ENCODE measurements at regions of chr1 and their contacts with region 1.

Region 1: DNA sequence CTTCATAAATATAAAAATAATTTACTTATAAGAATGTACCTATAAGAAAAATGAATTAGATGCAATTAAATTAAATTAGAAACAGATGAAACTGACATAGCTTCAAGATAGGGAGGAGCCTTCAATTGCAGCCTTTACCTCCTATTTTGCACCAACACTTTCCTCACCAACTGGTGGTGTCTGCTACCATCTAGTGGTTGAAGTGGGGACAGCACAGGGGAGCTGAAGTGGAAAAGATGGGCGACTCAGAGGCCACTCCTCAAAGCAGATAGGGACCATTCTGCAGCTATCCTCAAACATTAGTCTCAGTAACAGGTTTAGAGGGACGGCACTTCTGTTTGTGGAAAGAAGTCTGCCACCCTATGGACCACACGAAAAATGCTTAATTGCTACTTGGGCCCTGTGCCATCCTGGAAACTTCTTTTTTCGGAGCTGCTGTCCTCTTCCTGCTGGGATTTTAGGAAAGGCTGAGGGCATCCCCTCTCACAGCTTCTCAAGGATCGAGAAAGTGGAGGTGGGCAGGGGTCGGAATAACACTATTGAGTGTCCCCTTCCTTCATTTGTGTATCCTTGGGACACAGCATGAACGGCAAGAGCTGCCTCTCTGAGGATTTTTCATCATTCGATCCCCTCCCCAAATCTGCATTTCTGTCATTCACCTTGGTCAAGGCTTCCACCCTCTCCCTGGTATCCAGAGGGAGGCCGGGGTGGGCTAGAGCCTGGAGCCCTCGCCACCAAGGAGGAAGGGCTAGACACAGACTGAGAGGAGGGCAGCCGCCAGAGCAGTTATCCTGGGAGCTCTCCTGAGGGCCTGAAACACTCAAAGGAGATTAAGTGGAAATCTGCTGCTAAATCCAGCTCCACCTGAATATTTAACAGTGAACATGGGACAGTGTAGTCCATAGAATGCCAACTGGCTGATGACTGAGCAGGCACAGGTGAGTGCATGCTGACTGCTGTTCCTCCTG is 9.6 kb downstream of the PROK1 start:
- DNase-seq: peak; percentile 66 to 94 (median 85)
- H3K4me3 ChIP-seq: no peak overlapping the region
- H3K27ac ChIP-seq: no peak overlapping the region
- H3K4me1 ChIP-seq: no peaks in the 10 kb centered on the region
- H3K27me3 ChIP-seq: no peaks in the 10 kb centered on the region
- CTCF ChIP-seq: peak; percentile 92 to 99 (median 98)
- POLR2A ChIP-seq: no peak

Region 2: GRCh38 chr1:109959974-109960744 is 500.4 kb before region 1 on chr1:
- intact Hi-C with region 1: no loop called
- DNase-seq: no peak
- H3K4me3 ChIP-seq: no peak overlapping the region
- H3K27ac ChIP-seq: peak overlapping the region in 1 of 5 donors; percentile 7
- H3K4me1 ChIP-seq: no peaks in the 10 kb centered on the region
- H3K27me3 ChIP-seq: no peaks in the 10 kb centered on the region
- CTCF ChIP-seq: no peak
- POLR2A ChIP-seq: no peak

Region 3: GRCh38 chr1:110412576-110412975 is 48.0 kb before region 1 on chr1:
- intact Hi-C with region 1: loop called (anchors 2 to 5 kb)
- DNase-seq: peak; percentile 78 to 93 (median 87)
- H3K4me3 ChIP-seq: no peak overlapping the region
- H3K27ac ChIP-seq: peak overlapping the region in 2 of 5 donors; percentile 4 to 46
- H3K4me1 ChIP-seq: peaks cover 0 to 8% of the 10 kb centered on the region in 2 donors
- H3K27me3 ChIP-seq: no peaks in the 10 kb centered on the region
- CTCF ChIP-seq: peak; percentile 79 to 97 (median 91)
- POLR2A ChIP-seq: no peak